Activated T-helper 1 cell treated with anti-CD3 and anti-CD28 coated beads, Interleukin-12 subunit alpha, Interleukin-12 subunit beta, Interleukin-2, Interleukin-4 antibody, amounts not matched to agents 30 ng/mL and 10 ng/mL and 1 ng/mL, durations not matched to agents 14 hours and 24 hours and 36 hours (primary cell): ENCODE measurements at regions of chr5 and their contacts with region 1.

Region 1: GRCh38 chr5:140107312-140108083 is 6.4 kb upstream of the PURA start:
- DNase-seq: peak; percentile 90
- H3K4me3 Mint-ChIP-seq: peak overlapping the region; percentile 90
- H3K27ac Mint-ChIP-seq: peak overlapping the region; percentile 93
- H3K4me1 Mint-ChIP-seq: peaks cover 41% of the 10 kb centered on the region
- H3K27me3 Mint-ChIP-seq: peaks cover 60% of the 10 kb centered on the region

Region 2: GRCh38 chr5:138213161-138214029 is 1894.1 kb before region 1 on chr5 and contains the start of gene CDC23:
- intact Hi-C with region 1: loop called (anchors 5 kb)
- DNase-seq: peak; percentile 89
- H3K4me3 Mint-ChIP-seq: peak within 1 kb of the TSS; percentile 96
- H3K27ac Mint-ChIP-seq: peak within 1 kb of the TSS; percentile 93
- H3K4me1 Mint-ChIP-seq: peaks cover 24% of the 10 kb centered on the region
- H3K27me3 Mint-ChIP-seq: no peaks in the 10 kb centered on the region
- total RNA-seq, gene CDC23: 48.0 and 50.4 TPM in 2 replicates

Region 3: GRCh38 chr5:139392678-139393496 is 714.6 kb before region 1 on chr5:
- intact Hi-C with region 1: loop called (anchors 5 kb)
- DNase-seq: peak; percentile 84
- H3K4me3 Mint-ChIP-seq: peak overlapping the region; percentile 96
- H3K27ac Mint-ChIP-seq: peak overlapping the region; percentile 95
- H3K4me1 Mint-ChIP-seq: peaks cover 58% of the 10 kb centered on the region
- H3K27me3 Mint-ChIP-seq: no peaks in the 10 kb centered on the region

Region 4: GRCh38 chr5:139426203-139426885 is 681.2 kb before region 1 on chr5:
- intact Hi-C with region 1: no loop called
- DNase-seq: no peak
- H3K4me3 Mint-ChIP-seq: no peak overlapping the region
- H3K27ac Mint-ChIP-seq: no peak overlapping the region
- H3K4me1 Mint-ChIP-seq: peaks cover 24% of the 10 kb centered on the region
- H3K27me3 Mint-ChIP-seq: no peaks in the 10 kb centered on the region

Region 5: DNA sequence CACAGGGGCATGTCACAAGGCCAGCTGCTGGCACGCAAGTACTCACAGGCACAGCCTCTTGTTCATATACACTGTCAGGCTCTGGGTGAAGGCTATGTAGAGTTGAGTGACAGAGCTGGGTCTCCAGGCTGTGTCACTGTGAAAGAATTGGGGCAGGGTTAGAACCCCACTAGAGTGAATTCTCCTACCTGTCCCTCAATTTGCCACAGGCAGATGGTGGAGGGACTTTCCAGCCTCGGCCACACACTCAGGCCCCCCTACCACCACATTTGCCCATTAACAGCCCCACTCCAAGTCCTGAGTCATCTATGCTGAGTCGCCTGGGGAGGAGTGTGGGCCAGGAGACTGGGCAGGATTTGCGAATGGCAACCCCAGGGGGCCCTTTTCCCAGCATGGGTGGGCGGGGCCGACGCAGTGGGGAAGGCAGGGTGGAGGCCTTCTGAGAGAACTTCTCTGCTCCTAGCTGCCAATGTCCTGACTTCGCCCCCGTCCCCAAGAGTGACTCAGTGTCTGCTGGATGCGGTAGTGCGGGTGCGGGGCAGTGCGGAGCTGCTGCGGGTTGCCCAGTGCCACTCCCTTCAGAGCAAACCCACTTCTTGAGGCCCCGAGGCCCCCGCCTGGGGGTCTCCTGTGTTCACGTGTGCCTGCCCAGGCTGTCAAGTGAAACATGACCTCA is 362.2 kb before region 1 on chr5:
- intact Hi-C with region 1: no loop called
- DNase-seq: no peak
- H3K4me3 Mint-ChIP-seq: no peak overlapping the region
- H3K27ac Mint-ChIP-seq: no peak overlapping the region
- H3K4me1 Mint-ChIP-seq: peaks cover 23% of the 10 kb centered on the region
- H3K27me3 Mint-ChIP-seq: peaks cover 38% of the 10 kb centered on the region

Region 6: GRCh38 chr5:140145818-140146522 is 38.5 kb after region 1 on chr5:
- intact Hi-C with region 1: loop called (anchors 1 kb)
- DNase-seq: peak; percentile 41
- H3K4me3 Mint-ChIP-seq: no peak overlapping the region
- H3K27ac Mint-ChIP-seq: no peak overlapping the region
- H3K4me1 Mint-ChIP-seq: peaks cover 5% of the 10 kb centered on the region
- H3K27me3 Mint-ChIP-seq: peaks cover 42% of the 10 kb centered on the region

Region 7: DNA sequence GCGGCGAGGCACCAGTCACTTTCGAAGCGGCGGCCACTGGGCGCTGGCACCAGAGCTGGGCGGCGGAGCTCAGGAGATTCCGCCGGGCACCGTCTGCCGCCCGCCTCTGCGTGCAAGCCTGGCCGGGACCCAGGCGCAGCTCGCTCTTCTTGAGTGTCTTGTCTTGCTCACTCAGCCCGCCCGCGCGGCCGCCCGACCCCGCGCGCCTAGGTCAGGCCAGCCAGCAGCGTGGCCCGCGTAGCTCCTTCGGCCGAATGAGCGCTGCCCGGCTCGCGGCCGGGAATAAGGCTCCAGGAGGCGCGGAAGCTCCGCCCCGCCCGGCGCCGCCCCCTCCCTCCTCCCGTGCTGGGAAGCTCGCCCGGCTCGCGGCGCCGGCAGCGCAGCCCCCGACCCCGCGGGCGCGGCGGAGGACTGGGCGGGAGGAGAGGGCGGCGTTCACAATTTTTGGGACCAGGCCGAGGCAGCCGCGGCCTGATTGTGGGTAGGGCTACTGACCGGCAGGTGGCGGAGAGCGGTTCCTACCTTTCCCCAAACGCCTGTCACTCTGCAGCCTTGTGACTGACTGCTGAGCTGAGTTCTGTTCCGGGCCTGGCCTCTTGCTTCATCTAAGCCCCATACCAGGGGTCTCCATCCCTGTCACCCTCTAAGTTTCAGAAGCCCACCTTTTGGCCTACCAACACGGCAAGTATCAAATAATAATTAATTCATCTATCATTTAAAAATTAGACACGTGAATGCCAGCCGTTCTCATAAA is 239.0 kb after region 1 on chr5 and contains the start of gene HBEGF:
- intact Hi-C with region 1: loop called (anchors 5 kb)
- DNase-seq: peak; percentile 55
- H3K4me3 Mint-ChIP-seq: peak within 1 kb of the TSS; percentile 87
- H3K27ac Mint-ChIP-seq: peak within 1 kb of the TSS; percentile 99
- H3K4me1 Mint-ChIP-seq: peaks cover 77% of the 10 kb centered on the region
- H3K27me3 Mint-ChIP-seq: peaks cover 1% of the 10 kb centered on the region
- total RNA-seq, gene HBEGF: 28.5 and 28.9 TPM in 2 replicates